Calu3 (cell line): ENCODE measurements at regions of chr3 and their contacts with region 1.

Region 1: DNA sequence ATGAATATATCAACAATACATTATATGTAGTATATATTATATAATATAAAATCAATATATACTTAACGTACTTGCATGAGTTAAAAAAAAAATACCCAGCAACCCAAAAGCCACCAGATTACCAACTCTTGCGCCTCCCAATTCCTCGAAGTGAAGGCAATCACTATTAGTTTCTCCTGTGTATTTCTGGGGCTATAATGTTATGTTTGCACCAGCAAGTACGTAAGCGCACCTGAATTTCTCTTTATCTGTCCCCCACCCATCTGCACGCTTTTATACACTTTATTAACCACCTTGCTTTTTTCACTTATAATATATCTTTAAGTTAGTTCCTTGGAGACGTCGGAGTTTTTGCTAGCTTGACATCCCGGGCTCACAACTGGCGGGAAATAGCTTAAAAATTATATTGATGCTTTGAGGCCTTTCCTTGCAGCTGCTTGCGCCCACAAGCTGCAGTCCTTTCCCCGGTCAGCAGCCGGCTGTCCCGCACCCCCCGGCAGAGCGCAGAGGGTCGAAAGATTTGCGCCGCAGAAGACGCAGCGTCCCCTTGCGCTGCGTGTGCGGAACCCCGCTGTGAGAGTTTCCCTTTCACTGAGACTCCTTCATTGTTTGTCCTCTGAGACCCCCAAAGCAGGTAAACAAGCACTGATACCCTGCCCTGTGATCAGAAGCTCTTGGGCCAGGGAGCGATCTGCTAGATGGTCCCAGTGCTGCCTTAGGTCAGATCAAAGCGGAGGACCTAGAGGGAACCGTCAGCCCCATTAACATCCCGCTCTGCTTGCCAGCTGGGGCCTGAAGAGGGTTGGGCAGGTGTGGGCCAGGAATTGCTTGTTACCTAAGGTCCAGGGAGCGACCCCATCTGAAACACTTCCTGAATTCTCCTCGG is 8.9 kb upstream of the EOMES start:
- DNase-seq: no peak
- H3K4me3 Mint-ChIP-seq: no peak overlapping the region
- H3K27ac Mint-ChIP-seq: no peak overlapping the region
- H3K4me1 Mint-ChIP-seq: no peaks in the 10 kb centered on the region
- H3K27me3 Mint-ChIP-seq: peaks cover 52% of the 10 kb centered on the region
- CTCF ChIP-seq: no peak

Region 2: DNA sequence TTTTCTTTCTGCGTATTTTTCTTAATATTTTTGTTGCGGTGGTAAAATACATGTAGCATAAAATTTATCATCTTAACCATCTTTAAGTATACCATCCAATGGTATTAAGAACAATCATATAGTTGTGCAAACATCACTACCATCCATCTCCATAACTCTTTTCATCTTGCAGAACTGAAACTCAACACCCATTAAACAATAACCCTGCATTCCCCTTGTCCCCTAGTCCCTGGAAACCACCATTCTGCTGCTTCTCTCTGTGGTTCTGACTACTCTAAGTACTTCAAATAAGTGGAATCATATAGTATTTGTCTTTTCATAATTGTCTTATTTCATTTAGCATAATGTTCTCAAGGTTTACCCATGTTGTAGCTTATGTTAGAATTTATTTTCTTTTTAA is 58.4 kb after region 1 on chr3:
- CTCF ChIA-PET with region 1: no interaction called
- intact Hi-C with region 1: loop called (anchors 1 kb)
- DNase-seq: no peak
- H3K4me3 Mint-ChIP-seq: no peak overlapping the region
- H3K27ac Mint-ChIP-seq: no peak overlapping the region
- H3K4me1 Mint-ChIP-seq: no peaks in the 10 kb centered on the region
- H3K27me3 Mint-ChIP-seq: peaks cover 13% of the 10 kb centered on the region
- CTCF ChIP-seq: no peak

Region 3: GRCh38 chr3:27960133-27960532 is 229.1 kb after region 1 on chr3:
- CTCF ChIA-PET with region 1: no interaction called
- intact Hi-C with region 1: no loop called
- DNase-seq: no peak
- H3K4me3 Mint-ChIP-seq: no peak overlapping the region
- H3K27ac Mint-ChIP-seq: no peak overlapping the region
- H3K4me1 Mint-ChIP-seq: no peaks in the 10 kb centered on the region
- H3K27me3 Mint-ChIP-seq: no peaks in the 10 kb centered on the region
- CTCF ChIP-seq: no peak